Tibial artery (tissue), 4 donors: ENCODE measurements at regions of chr1 and their contacts with region 1.

Region 1: DNA sequence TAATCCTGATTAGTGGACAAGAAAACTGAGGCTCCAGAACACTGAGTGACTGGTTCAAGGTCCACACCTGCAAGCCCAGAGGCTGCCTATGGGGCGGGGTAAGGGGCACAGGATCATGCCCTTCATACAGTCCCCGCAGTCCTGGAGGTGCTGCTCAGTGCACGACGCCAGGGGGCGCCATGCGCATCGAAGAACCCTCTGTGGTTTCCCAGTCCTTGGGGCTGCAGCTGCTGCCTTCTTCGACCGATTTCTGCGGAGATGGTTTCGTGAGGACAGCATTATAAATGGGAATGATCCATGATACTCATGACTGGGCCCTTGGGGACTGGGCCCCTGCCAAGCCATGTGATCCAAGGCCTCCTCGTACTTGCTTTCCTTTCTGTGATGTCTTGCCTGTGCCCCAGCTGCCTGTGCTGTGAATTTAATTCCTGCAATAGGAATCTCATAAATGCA is 37.1 kb upstream of the ARHGEF10L start:
- DNase-seq: peak; percentile 94 to 96
- H3K4me3 ChIP-seq: no peak overlapping the region
- H3K27ac ChIP-seq: peak overlapping the region; percentile 76 to 81
- H3K4me1 ChIP-seq: peaks cover 0 to 16% (median 11%) of the 10 kb centered on the region in 4 donors
- H3K27me3 ChIP-seq: no peaks in the 10 kb centered on the region
- CTCF ChIP-seq: peak; percentile 96 to 97

Region 2: DNA sequence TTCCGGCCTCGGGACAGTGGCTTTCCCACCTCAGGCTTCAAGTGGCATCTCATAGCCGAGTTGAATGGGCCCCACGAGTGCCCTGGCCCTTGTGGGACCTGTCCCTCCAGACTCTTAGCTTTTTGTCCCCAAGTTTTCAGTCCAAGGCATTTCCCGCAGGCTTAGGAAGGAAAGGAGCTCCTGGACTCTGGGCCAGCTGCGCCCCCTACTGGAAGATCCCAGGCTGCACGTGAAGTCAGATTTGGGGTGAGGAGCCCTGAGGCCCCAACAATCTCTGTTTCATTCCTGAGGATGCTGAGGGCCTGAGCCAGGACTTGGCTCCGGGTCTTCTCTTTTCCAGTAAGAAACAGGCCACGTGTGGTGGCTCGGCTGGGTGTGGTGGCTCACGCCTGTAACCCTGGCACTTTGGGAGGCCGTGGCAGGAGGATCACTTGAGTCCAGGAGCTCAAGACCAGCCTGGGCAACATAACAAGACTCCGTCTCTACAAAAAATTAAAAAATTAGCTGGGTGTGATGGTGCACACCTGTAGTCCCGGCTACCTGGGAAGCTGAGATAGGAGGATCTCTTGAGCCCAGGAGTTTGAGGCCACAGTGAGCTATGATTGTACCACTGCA is 104.6 kb after region 1 on chr1:
- intact Hi-C with region 1: loop called (anchors 2 kb)
- DNase-seq: peak; percentile 79 to 88
- H3K4me3 ChIP-seq: no peak overlapping the region
- H3K27ac ChIP-seq: peak overlapping the region; percentile 100
- H3K4me1 ChIP-seq: peaks cover 0 to 85% (median 36%) of the 10 kb centered on the region in 4 donors
- H3K27me3 ChIP-seq: no peaks in the 10 kb centered on the region
- CTCF ChIP-seq: peak; percentile 85 to 96